CD4-positive, alpha-beta T cell (primary cell): ENCODE measurements at regions of chrX and their contacts with region 1.

Region 1: DNA sequence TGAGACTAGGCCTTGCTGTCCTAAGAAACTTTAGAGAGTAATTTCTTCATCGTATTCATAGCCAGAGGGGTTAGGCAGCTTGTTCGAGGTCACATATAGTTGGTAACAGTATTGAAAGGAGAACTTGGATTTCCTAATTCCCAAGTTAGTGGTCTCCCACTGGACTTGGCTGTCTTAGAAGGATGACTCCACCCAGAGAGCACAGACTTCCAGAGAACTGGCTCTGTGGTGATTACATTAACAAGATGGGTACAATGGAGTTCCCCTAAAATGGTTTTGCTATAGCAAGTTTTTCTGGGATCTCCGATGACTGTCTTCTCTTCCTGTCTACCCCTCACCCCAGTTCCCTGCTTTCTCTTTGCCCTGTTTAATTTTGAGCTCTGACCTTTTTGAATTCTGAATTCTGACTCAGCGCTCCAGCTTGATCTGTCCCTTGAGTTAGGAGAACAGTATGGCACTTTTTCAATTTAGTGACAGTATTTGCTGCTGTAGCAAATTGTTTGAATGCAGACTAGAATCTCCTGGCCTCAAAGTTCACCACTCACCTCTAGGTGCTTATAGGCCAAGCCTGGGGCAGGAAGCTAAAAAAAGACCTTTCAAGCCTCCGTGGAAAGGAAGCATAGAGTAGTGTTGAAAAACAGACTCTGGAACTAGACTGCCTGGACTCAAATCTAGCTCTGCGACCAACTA is 6.9 kb downstream of the MSN start:
- DNase-seq: peak in 5 of 14 experiments; percentile 8 to 64 (median 53)
- ATAC-seq: peak; percentile 68
- H3K4me3 ChIP-seq: peak overlapping the region; percentile 44
- H3K4me3 Mint-ChIP-seq: peak overlapping the region; percentile 87
- H3K27ac ChIP-seq: peak overlapping the region; percentile 50 to 65
- H3K27ac Mint-ChIP-seq: peak overlapping the region; percentile 93
- H3K4me1 ChIP-seq: peaks cover 72% of the 10 kb centered on the region
- H3K4me1 Mint-ChIP-seq: peaks cover 92% of the 10 kb centered on the region
- H3K27me3 ChIP-seq: no peaks in the 10 kb centered on the region
- H3K27me3 Mint-ChIP-seq: no peaks in the 10 kb centered on the region
- CTCF ChIP-seq: no peak

Region 2: DNA sequence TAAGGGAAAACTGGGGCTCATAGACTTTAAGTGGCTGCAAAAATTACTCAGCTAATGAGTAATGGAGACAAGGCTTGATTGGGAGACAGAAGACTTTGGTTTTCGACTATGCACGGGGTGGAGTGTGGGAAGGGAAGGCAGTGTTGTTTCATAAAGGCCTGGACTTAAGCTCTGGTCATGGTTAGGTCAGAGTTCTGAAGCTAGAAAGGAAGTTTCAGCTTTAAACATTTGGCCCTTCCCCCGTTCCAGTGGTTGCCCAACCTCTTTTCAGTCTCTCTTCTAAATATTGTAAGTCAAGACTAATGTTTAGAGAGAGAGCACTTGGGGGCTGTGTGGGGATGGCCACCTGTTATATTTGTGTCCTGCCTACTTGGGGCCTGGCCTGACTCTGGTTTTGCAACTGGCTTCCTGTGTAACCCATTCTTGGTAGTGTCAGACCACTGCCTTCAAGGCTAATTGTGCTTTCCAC is 14.1 kb after region 1 on chrX:
- CTCF ChIA-PET with region 1: no interaction called
- POLR2A ChIA-PET with region 1: interaction called, 4 read pairs
- intact Hi-C with region 1: loop called in 1 of 2 experiments (anchors 1 kb)
- DNase-seq: no peak
- ATAC-seq: no peak
- H3K4me3 ChIP-seq: no peak overlapping the region
- H3K4me3 Mint-ChIP-seq: peak overlapping the region; percentile 21
- H3K27ac ChIP-seq: peak overlapping the region; percentile 18 to 39
- H3K27ac Mint-ChIP-seq: peak overlapping the region; percentile 94
- H3K4me1 ChIP-seq: peaks cover 91% of the 10 kb centered on the region
- H3K4me1 Mint-ChIP-seq: peaks cover 88% of the 10 kb centered on the region
- H3K27me3 ChIP-seq: no peaks in the 10 kb centered on the region
- H3K27me3 Mint-ChIP-seq: no peaks in the 10 kb centered on the region
- CTCF ChIP-seq: no peak

Region 3: GRCh38 chrX:65718538-65718937 is 44.2 kb after region 1 on chrX:
- CTCF ChIA-PET with region 1: interaction called, 3 read pairs
- POLR2A ChIA-PET with region 1: no interaction called
- intact Hi-C with region 1: loop called (anchors 2 to 5 kb)
- DNase-seq: no peak
- ATAC-seq: no peak
- H3K4me3 ChIP-seq: no peak overlapping the region
- H3K4me3 Mint-ChIP-seq: no peak overlapping the region
- H3K27ac ChIP-seq: no peak overlapping the region
- H3K27ac Mint-ChIP-seq: peak overlapping the region; percentile 96
- H3K4me1 ChIP-seq: peaks cover 72% of the 10 kb centered on the region
- H3K4me1 Mint-ChIP-seq: peaks cover 91% of the 10 kb centered on the region
- H3K27me3 ChIP-seq: no peaks in the 10 kb centered on the region
- H3K27me3 Mint-ChIP-seq: no peaks in the 10 kb centered on the region
- CTCF ChIP-seq: no peak

Region 4: GRCh38 chrX:65783746-65784145 is 109.4 kb after region 1 on chrX:
- CTCF ChIA-PET with region 1: no interaction called
- POLR2A ChIA-PET with region 1: no interaction called
- intact Hi-C with region 1: no loop called
- DNase-seq: no peak
- ATAC-seq: no peak
- H3K4me3 ChIP-seq: no peak overlapping the region
- H3K4me3 Mint-ChIP-seq: no peak overlapping the region
- H3K27ac ChIP-seq: no peak overlapping the region
- H3K27ac Mint-ChIP-seq: no peak overlapping the region
- H3K4me1 ChIP-seq: no peaks in the 10 kb centered on the region
- H3K4me1 Mint-ChIP-seq: peaks cover 8% of the 10 kb centered on the region
- H3K27me3 ChIP-seq: no peaks in the 10 kb centered on the region
- H3K27me3 Mint-ChIP-seq: no peaks in the 10 kb centered on the region
- CTCF ChIP-seq: no peak